Activated CD4-positive, alpha-beta T cell treated with anti-CD3 and anti-CD28 coated beads for 36 hours (primary cell): ENCODE measurements at regions of chr1 and their contacts with region 1.

Region 1: DNA sequence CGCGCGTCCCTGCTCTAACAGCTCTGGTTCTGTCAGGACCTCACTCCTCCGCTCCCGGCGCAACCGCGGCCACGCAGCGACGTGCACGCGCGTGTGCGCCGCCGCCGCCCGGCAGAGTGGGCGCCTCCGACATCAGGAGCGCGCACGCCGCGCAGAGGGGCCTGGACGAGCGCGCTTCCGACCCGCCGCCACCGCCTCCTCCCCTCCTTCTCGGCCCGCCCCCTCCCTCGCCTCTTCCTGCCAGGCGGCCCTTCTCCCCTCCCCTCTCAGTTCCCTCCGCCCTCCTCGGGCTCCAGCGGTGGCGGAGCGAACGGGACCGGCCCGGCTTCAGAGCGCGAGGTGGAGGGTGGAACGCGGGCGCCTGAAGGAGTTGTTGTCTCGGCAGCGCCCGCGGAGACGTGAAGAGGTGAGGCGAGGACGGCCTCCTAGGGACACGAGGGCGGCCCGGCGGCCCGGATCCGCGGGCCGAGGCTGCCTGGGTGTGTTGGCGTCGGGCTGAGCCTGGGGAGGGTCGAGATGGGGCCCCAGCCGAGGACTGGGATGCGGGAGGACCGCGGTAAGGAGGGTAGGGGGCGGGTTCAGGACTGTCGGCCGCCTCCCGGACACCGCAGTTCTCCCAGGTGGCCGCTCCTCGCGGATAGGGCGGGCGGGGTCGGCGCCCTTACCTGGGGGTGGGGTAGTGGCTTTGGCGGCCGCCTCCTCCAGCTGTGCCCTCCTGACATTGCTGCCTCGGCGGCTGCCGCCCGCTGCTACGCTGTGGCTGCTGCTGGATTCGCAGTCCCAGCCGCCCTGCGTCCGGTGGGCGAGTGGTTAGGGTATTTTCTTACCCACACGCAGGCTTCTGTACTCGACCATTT is at the start of gene RABGAP1L:
- DNase-seq: peak; percentile 97
- ATAC-seq: peak; percentile 83
- H3K4me3 Mint-ChIP-seq: peak within 1 kb of the TSS; percentile 93
- H3K27ac Mint-ChIP-seq: peak within 1 kb of the TSS; percentile 95
- H3K4me1 Mint-ChIP-seq: peaks cover 59% of the 10 kb centered on the region
- H3K27me3 Mint-ChIP-seq: no peaks in the 10 kb centered on the region
- total RNA-seq, gene RABGAP1L: 22.6 to 29.9 TPM

Region 2: DNA sequence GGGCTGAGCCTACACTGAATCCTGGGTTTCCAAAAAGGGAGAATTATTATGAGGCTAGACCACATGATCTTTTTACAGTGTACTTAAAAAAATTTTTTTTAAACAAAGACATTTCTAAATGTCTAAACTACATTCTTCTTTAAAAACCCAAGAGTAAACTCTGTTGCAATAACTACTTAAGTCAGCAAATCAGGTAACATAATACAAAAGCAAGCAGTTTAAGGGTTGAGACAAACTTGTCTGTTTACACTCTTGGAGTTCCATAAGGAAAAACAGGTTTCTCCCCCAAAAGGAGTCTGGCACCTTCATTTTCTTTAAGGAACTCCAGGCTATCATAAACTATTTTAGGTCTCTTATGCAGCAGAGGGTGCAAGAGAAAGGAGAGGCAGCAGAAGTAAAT is 477.3 kb before region 1 on chr1:
- CTCF ChIA-PET with region 1: no interaction called
- POLR2A ChIA-PET with region 1: no interaction called
- intact Hi-C with region 1: no loop called
- DNase-seq: no peak
- ATAC-seq: no peak
- H3K4me3 Mint-ChIP-seq: no peak overlapping the region
- H3K27ac Mint-ChIP-seq: no peak overlapping the region
- H3K4me1 Mint-ChIP-seq: no peaks in the 10 kb centered on the region
- H3K27me3 Mint-ChIP-seq: no peaks in the 10 kb centered on the region

Region 3: GRCh38 chr1:173867753-173868265 is 291.7 kb before region 1 on chr1 and contains the start of gene GAS5:
- CTCF ChIA-PET with region 1: no interaction called
- POLR2A ChIA-PET with region 1: no interaction called
- intact Hi-C with region 1: loop called (anchors 2 kb)
- DNase-seq: peak; percentile 100
- ATAC-seq: peak; percentile 82
- H3K4me3 Mint-ChIP-seq: peak within 1 kb of the TSS; percentile 91
- H3K27ac Mint-ChIP-seq: peak within 1 kb of the TSS; percentile 97
- H3K4me1 Mint-ChIP-seq: peaks cover 57% of the 10 kb centered on the region
- H3K27me3 Mint-ChIP-seq: no peaks in the 10 kb centered on the region
- total RNA-seq, gene GAS5: 878 to 1,203 TPM

Region 4: DNA sequence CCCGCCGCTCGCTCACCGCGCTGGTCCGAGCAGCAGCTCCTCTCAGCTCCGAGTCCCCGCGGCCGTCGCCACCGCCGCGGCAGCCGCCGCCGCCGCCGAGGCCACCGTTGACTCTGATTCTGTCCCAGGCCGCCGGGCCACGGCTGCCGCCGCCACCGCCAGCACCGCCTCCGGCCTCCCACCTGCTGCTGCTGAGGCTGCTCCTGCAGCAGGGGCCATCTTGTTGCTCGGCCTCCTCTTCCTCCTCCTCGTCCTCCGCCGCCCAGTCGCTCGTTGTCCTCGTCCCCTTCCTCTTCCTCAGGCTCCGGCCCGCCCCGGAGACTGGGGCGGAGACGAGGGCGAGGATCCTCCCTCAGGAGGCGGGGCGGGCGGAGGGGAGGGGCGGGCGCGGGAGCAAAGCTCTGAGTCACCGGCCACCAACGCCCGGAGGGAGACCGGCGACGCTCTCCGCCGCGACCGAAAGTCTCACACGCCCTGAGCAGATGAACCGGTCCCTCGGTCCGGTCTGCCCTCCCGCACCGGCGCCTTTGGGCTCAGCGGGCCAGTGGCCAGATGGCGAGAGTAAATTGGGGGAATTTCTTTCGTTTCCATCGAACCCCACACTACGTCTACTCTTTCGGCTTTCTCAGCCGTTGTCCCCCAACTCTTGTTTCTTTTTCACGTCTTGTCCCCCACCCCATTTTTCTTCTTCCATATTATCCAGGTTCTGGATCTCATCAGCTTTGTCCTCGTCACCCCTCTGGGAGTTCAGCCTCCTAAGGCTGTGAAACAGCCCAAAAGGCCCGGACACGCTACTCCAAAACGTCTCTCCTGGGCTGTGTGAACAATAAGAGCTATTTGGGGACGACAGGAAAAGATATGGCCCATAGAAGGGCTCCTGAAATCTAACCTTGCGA is 137.2 kb before region 1 on chr1 and contains the start of gene RC3H1:
- CTCF ChIA-PET with region 1: no interaction called
- POLR2A ChIA-PET with region 1: interaction called, 3 read pairs
- intact Hi-C with region 1: loop called (anchors 1 kb)
- DNase-seq: peak; percentile 96
- ATAC-seq: peak; percentile 91
- H3K4me3 Mint-ChIP-seq: peak within 1 kb of the TSS; percentile 87
- H3K27ac Mint-ChIP-seq: peak within 1 kb of the TSS; percentile 96
- H3K4me1 Mint-ChIP-seq: peaks cover 31% of the 10 kb centered on the region
- H3K27me3 Mint-ChIP-seq: no peaks in the 10 kb centered on the region
- total RNA-seq, gene RC3H1: 27.3 to 37.0 TPM

Region 5: DNA sequence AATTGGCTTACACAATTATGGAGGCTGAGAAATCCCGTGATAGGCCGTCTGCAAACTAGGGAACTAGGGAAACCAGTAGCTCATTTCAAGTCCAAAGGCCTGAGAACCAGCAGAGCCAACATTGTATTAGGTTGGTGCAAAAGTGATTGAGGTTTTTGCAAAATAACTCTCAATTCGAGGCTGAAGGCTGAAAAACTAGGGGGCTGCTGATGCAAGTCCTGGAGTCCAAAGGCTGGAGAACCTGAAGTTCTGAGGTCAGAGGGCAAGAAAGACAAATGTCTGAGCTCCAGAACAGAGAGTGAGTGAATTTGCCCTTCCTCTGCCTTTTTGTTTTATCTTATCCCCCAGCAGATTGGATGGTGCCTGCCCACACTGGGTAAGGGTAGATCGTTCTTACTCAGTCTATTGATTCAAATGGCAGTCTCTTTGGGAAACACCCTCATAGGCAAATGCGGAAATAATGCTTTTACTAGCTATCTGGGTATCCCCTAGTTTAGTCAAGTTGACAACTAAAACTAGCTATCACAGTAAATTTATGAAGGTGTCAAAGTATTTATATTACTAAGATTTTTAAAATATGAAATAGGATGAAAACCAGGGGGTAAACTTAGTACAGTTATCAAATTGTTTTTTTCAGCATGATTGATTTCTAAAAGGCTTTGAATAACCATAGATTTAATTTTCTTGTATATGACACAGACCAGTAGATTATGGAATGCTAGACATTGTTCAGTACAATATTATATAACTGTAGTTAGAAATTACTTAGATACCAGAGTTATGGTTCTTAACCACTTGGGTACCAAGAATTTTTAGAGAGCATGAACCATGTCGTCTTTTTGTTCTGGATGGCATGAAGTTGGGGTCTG is 15.2 kb after region 1 on chr1:
- CTCF ChIA-PET with region 1: interaction called, 3 read pairs
- POLR2A ChIA-PET with region 1: interaction called, 5 read pairs
- intact Hi-C with region 1: loop called (anchors 1 to 2 kb)
- DNase-seq: peak; percentile 61
- ATAC-seq: peak; percentile 95
- H3K4me3 Mint-ChIP-seq: no peak overlapping the region
- H3K27ac Mint-ChIP-seq: no peak overlapping the region
- H3K4me1 Mint-ChIP-seq: peaks cover 26% of the 10 kb centered on the region
- H3K27me3 Mint-ChIP-seq: no peaks in the 10 kb centered on the region

Region 6: GRCh38 chr1:174204697-174205308 is 45.3 kb after region 1 on chr1:
- CTCF ChIA-PET with region 1: no interaction called
- POLR2A ChIA-PET with region 1: interaction called, 6 read pairs
- intact Hi-C with region 1: loop called (anchors 1 to 2 kb)
- DNase-seq: peak; percentile 24
- ATAC-seq: peak; percentile 76
- H3K4me3 Mint-ChIP-seq: peak overlapping the region; percentile 7
- H3K27ac Mint-ChIP-seq: peak overlapping the region; percentile 87
- H3K4me1 Mint-ChIP-seq: peaks cover 71% of the 10 kb centered on the region
- H3K27me3 Mint-ChIP-seq: no peaks in the 10 kb centered on the region